Activated T-helper 2 cell treated with anti-CD3 and anti-CD28 coated beads, Interferon-gamma antibody, Interleukin-2, Interleukin-4, amounts not matched to agents 10 μg/mL and 5 μg/mL and 100 μg/mL, durations not matched to agents 14 hours and 24 hours and 36 hours (primary cell): ENCODE measurements at regions of chr13 and their contacts with region 1.

Region 1: GRCh38 chr13:46184277-46184699 is 2.3 kb upstream of the LCP1 start:
- DNase-seq: peak; percentile 70
- H3K4me3 Mint-ChIP-seq: peak overlapping the region; percentile 94
- H3K27ac Mint-ChIP-seq: peak overlapping the region; percentile 97
- H3K4me1 Mint-ChIP-seq: peaks cover 41% of the 10 kb centered on the region
- H3K27me3 Mint-ChIP-seq: no peaks in the 10 kb centered on the region

Region 2: DNA sequence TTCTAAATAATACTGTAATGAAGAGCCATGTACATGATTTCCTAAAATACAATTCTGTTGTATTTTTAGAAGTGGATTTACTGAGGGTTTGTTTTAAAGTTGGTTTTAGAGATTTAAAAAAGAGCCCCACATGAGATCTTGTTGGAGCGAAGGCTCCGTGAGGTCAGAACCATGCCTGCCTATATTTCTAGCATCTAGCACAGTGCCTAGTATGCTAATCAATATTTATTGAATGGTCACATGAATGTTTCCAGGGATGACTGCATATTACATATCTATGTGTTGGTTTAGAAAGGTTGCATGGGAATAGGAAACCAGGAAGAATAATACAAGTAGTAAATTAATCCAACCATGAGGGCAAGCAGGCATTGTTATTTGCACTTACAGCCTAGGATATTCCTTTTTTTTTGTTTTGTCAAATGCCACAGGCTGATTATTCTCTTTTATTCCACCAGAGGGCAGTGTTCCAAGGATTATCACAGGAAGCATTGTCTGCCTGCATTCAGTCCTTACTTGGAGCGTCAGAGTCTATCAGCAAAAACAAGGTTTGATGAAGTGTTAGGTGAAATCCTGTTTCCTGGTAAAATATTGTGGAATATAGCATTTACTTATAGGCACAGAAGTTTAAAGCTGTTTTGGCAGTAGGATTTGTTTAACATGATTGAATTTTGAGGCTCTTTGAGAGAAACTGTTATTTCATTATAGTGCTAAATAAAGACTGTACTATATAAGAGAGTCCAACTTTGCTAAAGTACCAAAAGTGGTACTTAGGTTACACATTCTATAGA is 672.8 kb before region 1 on chr13:
- intact Hi-C with region 1: no loop called
- DNase-seq: no peak
- H3K4me3 Mint-ChIP-seq: no peak overlapping the region
- H3K27ac Mint-ChIP-seq: no peak overlapping the region
- H3K4me1 Mint-ChIP-seq: peaks cover 7% of the 10 kb centered on the region
- H3K27me3 Mint-ChIP-seq: no peaks in the 10 kb centered on the region

Region 3: GRCh38 chr13:46079770-46080169 is 104.5 kb before region 1 on chr13:
- intact Hi-C with region 1: no loop called
- DNase-seq: no peak
- H3K4me3 Mint-ChIP-seq: no peak overlapping the region
- H3K27ac Mint-ChIP-seq: no peak overlapping the region
- H3K4me1 Mint-ChIP-seq: peaks cover 5% of the 10 kb centered on the region
- H3K27me3 Mint-ChIP-seq: peaks cover 21% of the 10 kb centered on the region

Region 4: GRCh38 chr13:46146899-46147298 is 37.4 kb before region 1 on chr13:
- intact Hi-C with region 1: loop called (anchors 5 kb)
- DNase-seq: no peak
- H3K4me3 Mint-ChIP-seq: no peak overlapping the region
- H3K27ac Mint-ChIP-seq: no peak overlapping the region
- H3K4me1 Mint-ChIP-seq: peaks cover 23% of the 10 kb centered on the region
- H3K27me3 Mint-ChIP-seq: no peaks in the 10 kb centered on the region

Region 5: GRCh38 chr13:46168341-46168740 is 15.9 kb before region 1 on chr13:
- intact Hi-C with region 1: loop called (anchors 1 kb)
- DNase-seq: no peak
- H3K4me3 Mint-ChIP-seq: peak overlapping the region; percentile 69
- H3K27ac Mint-ChIP-seq: peak overlapping the region; percentile 94
- H3K4me1 Mint-ChIP-seq: peaks cover 90% of the 10 kb centered on the region
- H3K27me3 Mint-ChIP-seq: no peaks in the 10 kb centered on the region

Region 6: GRCh38 chr13:46211483-46212351 is 27.4 kb after region 1 on chr13 and contains the start of gene LRRC63:
- intact Hi-C with region 1: loop called (anchors 1 kb)
- DNase-seq: peak; percentile 83
- H3K4me3 Mint-ChIP-seq: peak within 1 kb of the TSS; percentile 89
- H3K27ac Mint-ChIP-seq: peak within 1 kb of the TSS; percentile 92
- H3K4me1 Mint-ChIP-seq: peaks cover 37% of the 10 kb centered on the region
- H3K27me3 Mint-ChIP-seq: peaks cover 4% of the 10 kb centered on the region
- total RNA-seq, gene LRRC63: 0.52 and 0.71 TPM in 2 replicates

Region 7: DNA sequence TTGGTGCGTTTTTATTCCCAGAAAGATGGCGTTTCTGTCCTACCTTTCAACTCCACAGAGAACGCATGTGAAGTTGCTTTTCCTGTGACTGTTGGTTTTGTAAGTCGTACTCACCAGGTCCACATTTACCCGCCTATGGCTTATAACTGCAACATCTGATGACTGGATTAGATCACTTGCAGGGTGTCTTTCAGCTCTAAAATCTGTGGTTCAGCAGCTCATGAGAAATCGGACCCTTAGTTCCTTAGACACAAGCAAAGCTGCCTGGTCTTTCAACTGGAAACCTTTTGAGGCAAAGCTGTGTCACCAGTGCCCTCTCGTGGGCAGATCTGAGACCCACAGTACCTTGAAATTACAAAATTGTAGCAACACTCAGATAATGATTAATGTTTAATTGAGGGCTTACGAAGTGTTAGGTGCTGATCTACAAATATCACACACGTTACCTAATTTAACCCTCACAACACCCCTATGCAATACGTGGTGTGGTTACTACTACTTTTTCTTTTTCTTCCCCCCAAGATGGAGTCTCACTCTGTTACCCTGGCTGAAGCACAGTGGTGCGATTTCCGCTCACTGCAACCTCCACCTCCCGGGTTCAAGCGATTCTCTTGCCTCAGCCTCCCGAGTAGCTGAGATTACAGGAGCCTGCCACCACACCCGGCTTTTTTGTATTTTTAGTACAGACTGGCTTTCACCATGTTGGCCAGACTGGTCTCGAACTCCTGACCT is 137.4 kb after region 1 on chr13:
- intact Hi-C with region 1: loop called (anchors 2 kb)
- DNase-seq: peak; percentile 61
- H3K4me3 Mint-ChIP-seq: peak overlapping the region; percentile 81
- H3K27ac Mint-ChIP-seq: peak overlapping the region; percentile 93
- H3K4me1 Mint-ChIP-seq: peaks cover 38% of the 10 kb centered on the region
- H3K27me3 Mint-ChIP-seq: peaks cover 2% of the 10 kb centered on the region

Region 8: DNA sequence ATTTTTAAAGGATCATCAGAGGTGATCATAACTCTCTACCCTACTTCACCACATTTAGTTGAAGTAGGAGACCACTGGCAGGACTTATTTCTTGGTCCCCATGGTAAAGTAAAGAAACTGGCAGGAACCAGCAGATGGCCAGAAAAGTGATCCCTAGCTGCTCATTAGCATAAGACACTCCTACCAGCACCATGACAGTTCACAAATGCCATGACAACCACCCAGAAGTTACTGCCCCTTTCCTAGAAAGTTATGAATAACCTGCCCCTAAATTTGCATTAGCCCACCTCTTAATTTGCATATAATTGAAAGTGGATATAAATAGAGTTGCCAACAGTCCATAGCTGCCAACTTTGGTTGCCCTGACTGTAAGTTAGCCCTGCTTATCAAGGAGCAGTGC is 221.2 kb after region 1 on chr13:
- intact Hi-C with region 1: no loop called
- DNase-seq: no peak
- H3K4me3 Mint-ChIP-seq: no peak overlapping the region
- H3K27ac Mint-ChIP-seq: no peak overlapping the region
- H3K4me1 Mint-ChIP-seq: peaks cover 9% of the 10 kb centered on the region
- H3K27me3 Mint-ChIP-seq: peaks cover 6% of the 10 kb centered on the region